T-cell (primary cell): ENCODE measurements at regions of chr15 and their contacts with region 1.

Region 1: GRCh38 chr15:50797923-50798322 is 32.4 kb upstream of the SPPL2A start:
- DNase-seq: no peak
- ATAC-seq: no peak
- H3K4me3 ChIP-seq: no peak overlapping the region
- H3K4me3 Mint-ChIP-seq: no peak overlapping the region
- H3K27ac ChIP-seq: no peak overlapping the region
- H3K27ac Mint-ChIP-seq: no peak overlapping the region
- H3K4me1 ChIP-seq: no peaks in the 10 kb centered on the region
- H3K4me1 Mint-ChIP-seq: no peaks in the 10 kb centered on the region
- H3K27me3 ChIP-seq: no peaks in the 10 kb centered on the region
- H3K27me3 Mint-ChIP-seq: no peaks in the 10 kb centered on the region

Region 2: DNA sequence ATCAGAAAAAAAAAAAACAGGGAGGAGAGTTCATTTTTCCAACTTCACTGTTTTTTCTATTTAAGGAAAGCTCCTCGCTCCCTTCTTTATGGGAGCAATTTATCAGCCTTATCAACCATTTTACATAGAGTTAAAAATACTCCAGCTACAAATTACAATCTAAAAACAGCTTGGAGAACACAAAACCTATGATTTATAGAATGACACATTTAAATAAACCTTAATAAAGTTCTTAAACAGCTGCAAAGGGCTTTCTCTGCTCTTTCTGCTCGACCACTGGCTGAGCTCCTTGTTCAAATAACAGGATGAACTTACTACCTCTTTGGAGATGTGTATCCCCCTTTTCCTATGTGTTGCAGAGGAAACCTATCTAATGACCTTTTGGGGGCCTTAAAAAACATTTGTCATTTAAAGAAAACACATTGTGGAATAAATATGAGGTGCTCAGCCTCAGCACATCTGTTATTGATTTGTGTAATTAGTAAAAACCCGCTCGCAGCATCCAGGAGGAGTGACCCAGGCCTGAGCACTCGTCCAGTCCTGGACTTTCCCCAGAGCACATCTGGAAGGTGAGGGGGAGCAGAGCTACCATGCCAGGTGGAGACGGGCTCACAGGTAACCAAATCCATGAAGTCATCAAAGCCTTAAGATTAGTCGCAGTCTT is 910.1 kb before region 1 on chr15:
- CTCF ChIA-PET with region 1: no interaction called
- POLR2A ChIA-PET with region 1: interaction called in 1 of 2 experiments, 11 read pairs
- DNase-seq: no peak
- ATAC-seq: no peak
- H3K4me3 ChIP-seq: no peak overlapping the region
- H3K4me3 Mint-ChIP-seq: no peak overlapping the region
- H3K27ac ChIP-seq: no peak overlapping the region
- H3K27ac Mint-ChIP-seq: no peak overlapping the region
- H3K4me1 ChIP-seq: no peaks in the 10 kb centered on the region
- H3K4me1 Mint-ChIP-seq: no peaks in the 10 kb centered on the region
- H3K27me3 ChIP-seq: peaks cover 0 to 2% of the 10 kb centered on the region in 2 experiments
- H3K27me3 Mint-ChIP-seq: peaks cover 0 to 4% of the 10 kb centered on the region in 2 donors

Region 3: GRCh38 chr15:50813877-50814276 is 16.0 kb after region 1 on chr15:
- CTCF ChIA-PET with region 1: no interaction called
- POLR2A ChIA-PET with region 1: no interaction called
- DNase-seq: no peak
- ATAC-seq: no peak
- H3K4me3 ChIP-seq: no peak overlapping the region
- H3K4me3 Mint-ChIP-seq: no peak overlapping the region
- H3K27ac ChIP-seq: no peak overlapping the region
- H3K27ac Mint-ChIP-seq: no peak overlapping the region
- H3K4me1 ChIP-seq: no peaks in the 10 kb centered on the region
- H3K4me1 Mint-ChIP-seq: no peaks in the 10 kb centered on the region
- H3K27me3 ChIP-seq: no peaks in the 10 kb centered on the region
- H3K27me3 Mint-ChIP-seq: peaks cover 0 to 7% of the 10 kb centered on the region in 2 donors

Region 4: DNA sequence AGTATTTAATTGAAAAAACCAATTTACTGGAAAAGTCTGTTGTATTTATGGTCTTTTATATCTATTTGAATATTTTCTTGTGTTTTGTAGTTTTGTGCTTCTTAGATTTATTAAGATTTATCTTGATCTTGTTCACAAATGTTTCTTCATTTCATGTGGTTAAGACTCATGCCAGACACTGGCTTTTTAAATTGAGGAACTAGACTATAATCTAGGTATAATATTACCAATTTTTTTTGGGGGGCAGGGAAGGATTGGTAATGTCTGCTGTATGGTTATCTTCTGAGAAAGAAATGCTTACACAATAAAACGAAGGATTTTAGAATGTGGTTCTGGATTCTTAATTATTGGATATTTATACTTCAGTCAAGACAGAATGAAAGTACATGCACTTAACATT is 135.4 kb after region 1 on chr15:
- CTCF ChIA-PET with region 1: no interaction called
- POLR2A ChIA-PET with region 1: no interaction called
- DNase-seq: no peak
- ATAC-seq: no peak
- H3K4me3 ChIP-seq: no peak overlapping the region
- H3K4me3 Mint-ChIP-seq: no peak overlapping the region
- H3K27ac ChIP-seq: no peak overlapping the region
- H3K27ac Mint-ChIP-seq: no peak overlapping the region
- H3K4me1 ChIP-seq: no peaks in the 10 kb centered on the region
- H3K4me1 Mint-ChIP-seq: peaks cover 0 to 1% (median 0%) of the 10 kb centered on the region in 3 donors
- H3K27me3 ChIP-seq: no peaks in the 10 kb centered on the region
- H3K27me3 Mint-ChIP-seq: no peaks in the 10 kb centered on the region